ENCODE measurements at regions of chr2 and their contacts with region 1.

Region 1: GRCh38 chr2:33372940-33373553 is 103.4 kb upstream of the RASGRP3 start:
- DNase-seq: peak; percentile 81
- H3K4me3 ChIP-seq: no peak overlapping the region
- H3K27ac ChIP-seq: no peak overlapping the region
- H3K4me1 ChIP-seq: peaks cover 6% of the 10 kb centered on the region
- H3K27me3 ChIP-seq: no peaks in the 10 kb centered on the region
- CTCF ChIP-seq: peak; percentile 48 to 55
- POLR2A ChIP-seq: no peak

Region 2: GRCh38 chr2:32553829-32554432 is 819.1 kb before region 1 on chr2:
- CTCF ChIA-PET with region 1: no interaction called
- POLR2A ChIA-PET with region 1: no interaction called
- dilution Hi-C with region 1: no loop called
- intact Hi-C with region 1: loop called (anchors 5 kb)
- DNase-seq: peak; percentile 63
- H3K4me3 ChIP-seq: no peak overlapping the region
- H3K27ac ChIP-seq: no peak overlapping the region
- H3K4me1 ChIP-seq: peaks cover 7% of the 10 kb centered on the region
- H3K27me3 ChIP-seq: no peaks in the 10 kb centered on the region
- CTCF ChIP-seq: peak; percentile 50
- POLR2A ChIP-seq: no peak

Region 3: DNA sequence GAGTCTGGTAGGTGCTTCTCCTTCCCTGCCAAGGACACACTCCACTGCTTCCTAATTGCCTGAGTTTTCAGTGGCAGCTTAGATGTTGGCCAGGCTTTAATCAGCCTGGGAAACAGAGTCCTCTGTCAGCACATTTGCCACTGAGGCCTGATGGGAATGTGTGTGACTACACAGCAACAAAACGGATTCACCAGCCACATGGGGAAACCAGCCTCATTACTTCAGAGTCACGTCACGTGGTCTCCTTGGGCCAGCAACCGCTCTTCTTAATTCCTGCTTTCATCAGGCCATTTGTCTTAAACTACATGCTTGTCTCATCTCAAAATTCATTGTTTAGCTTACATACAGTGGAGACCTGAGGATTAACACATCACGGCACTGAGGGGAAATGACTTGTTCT is 520.2 kb before region 1 on chr2:
- CTCF ChIA-PET with region 1: no interaction called
- POLR2A ChIA-PET with region 1: no interaction called
- dilution Hi-C with region 1: no loop called
- intact Hi-C with region 1: loop called (anchors 10 kb)
- DNase-seq: no peak
- H3K4me3 ChIP-seq: no peak overlapping the region
- H3K27ac ChIP-seq: no peak overlapping the region
- H3K4me1 ChIP-seq: no peaks in the 10 kb centered on the region
- H3K27me3 ChIP-seq: no peaks in the 10 kb centered on the region
- CTCF ChIP-seq: no peak
- POLR2A ChIP-seq: no peak

Region 4: DNA sequence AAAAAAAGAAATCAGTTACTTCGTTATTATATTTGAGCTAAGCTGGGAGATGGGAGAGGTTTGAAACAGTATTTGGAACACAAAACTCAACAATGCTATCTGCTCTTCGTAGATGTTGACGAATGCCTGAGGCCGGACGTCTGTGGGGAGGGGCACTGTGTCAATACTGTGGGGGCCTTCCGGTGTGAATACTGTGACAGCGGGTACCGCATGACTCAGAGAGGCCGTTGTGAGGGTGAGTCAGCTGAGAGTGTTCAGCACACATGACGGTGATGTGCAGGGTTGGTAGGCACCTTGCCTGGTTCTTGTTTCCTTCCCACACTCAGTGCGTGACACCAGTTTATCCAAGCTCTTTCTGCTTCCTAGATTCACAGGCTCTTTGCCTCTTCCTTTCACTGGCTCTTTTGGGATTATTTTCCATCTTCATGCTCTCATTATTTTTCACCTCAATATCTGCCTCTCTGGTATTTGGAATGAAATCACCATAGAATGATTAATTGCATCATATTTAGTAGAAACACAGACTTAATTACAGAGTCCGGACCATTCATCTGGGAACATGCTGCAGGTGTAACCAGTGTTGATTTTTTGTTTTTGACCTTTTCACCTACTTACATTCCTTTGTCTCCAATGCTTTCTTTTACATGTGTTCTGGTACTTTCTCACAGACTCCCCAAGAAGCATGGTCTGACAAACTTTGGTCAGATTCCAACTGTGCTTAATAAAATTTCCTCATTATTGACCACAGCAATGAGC is 97.2 kb before region 1 on chr2:
- CTCF ChIA-PET with region 1: interaction called, 10 read pairs
- POLR2A ChIA-PET with region 1: no interaction called
- dilution Hi-C with region 1: no loop called
- intact Hi-C with region 1: loop called (anchors 1 kb)
- DNase-seq: peak; percentile 80
- H3K4me3 ChIP-seq: no peak overlapping the region
- H3K27ac ChIP-seq: peak overlapping the region; percentile 84
- H3K4me1 ChIP-seq: peaks cover 6% of the 10 kb centered on the region
- H3K27me3 ChIP-seq: no peaks in the 10 kb centered on the region
- CTCF ChIP-seq: no peak
- POLR2A ChIP-seq: no peak

Region 5: GRCh38 chr2:33350632-33351031 is 22.4 kb before region 1 on chr2:
- CTCF ChIA-PET with region 1: interaction called, 15 read pairs
- POLR2A ChIA-PET with region 1: no interaction called
- dilution Hi-C with region 1: no loop called
- intact Hi-C with region 1: no loop called
- DNase-seq: no peak
- H3K4me3 ChIP-seq: no peak overlapping the region
- H3K27ac ChIP-seq: no peak overlapping the region
- H3K4me1 ChIP-seq: no peaks in the 10 kb centered on the region
- H3K27me3 ChIP-seq: no peaks in the 10 kb centered on the region
- CTCF ChIP-seq: no peak
- POLR2A ChIP-seq: no peak

Region 6: DNA sequence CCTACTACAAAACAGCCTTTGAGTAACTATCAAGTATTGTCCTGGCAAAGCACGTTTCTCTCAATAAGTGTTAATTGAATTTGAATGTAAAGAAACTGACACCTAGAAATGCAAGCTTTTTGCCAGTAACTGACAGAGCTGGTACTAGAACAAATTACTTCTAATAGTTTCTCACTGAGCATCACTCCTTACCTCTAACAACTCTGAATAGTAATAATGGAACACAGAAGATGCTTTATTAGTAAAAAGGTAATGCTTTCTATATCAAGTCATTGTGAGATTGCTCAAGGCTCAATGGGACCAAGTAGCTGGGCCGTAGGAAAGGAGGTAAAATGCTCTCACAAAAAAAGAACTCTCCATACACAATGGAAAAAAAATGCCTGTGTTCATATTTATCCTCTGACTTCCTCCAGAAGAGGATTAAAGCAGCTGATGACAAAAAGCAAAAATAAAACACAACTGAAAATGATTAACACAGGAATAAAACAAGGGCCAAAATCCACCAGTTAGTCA is 115.2 kb after region 1 on chr2:
- CTCF ChIA-PET with region 1: no interaction called
- POLR2A ChIA-PET with region 1: no interaction called
- dilution Hi-C with region 1: no loop called
- intact Hi-C with region 1: no loop called
- DNase-seq: no peak
- H3K4me3 ChIP-seq: no peak overlapping the region
- H3K27ac ChIP-seq: no peak overlapping the region
- H3K4me1 ChIP-seq: no peaks in the 10 kb centered on the region
- H3K27me3 ChIP-seq: peaks cover 6 to 7% of the 10 kb centered on the region in 2 experiments
- CTCF ChIP-seq: no peak
- POLR2A ChIP-seq: no peak